Mammary epithelial cell (primary cell): ENCODE measurements at regions of chrX and their contacts with region 1.

Region 1: GRCh38 chrX:15930585-15930984 is 76.0 kb upstream of the AP1S2 start:
- DNase-seq: peak; percentile 45
- H3K4me3 ChIP-seq: no peak overlapping the region
- H3K27ac ChIP-seq: no peak overlapping the region
- H3K4me1 ChIP-seq: no peaks in the 10 kb centered on the region
- H3K27me3 ChIP-seq: peaks cover 1% of the 10 kb centered on the region
- CTCF ChIP-seq: peak; percentile 36 to 65

Region 2: DNA sequence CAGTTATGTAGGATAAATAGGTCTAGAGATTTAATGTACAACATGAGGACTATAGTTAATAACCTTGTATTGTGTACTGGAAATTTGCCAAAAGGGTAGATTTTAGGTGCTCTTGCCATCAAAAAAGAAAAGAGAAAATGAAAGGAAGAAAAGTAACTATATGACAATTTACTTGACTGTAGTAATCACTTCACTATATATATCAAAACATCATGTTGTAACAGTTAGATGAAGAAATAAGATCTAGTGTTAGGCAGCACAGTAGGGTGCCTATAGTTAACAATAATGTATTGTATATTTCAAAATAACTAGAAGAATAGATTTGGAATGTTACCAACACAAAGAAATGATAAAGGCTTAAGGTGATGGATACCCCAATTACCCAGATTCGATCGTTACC is 40.1 kb before region 1 on chrX:
- CTCF ChIA-PET with region 1: no interaction called
- dilution Hi-C with region 1: loop called (anchors 5 kb)
- in situ Hi-C with region 1: no loop called
- intact Hi-C with region 1: no loop called
- DNase-seq: no peak
- H3K4me3 ChIP-seq: no peak overlapping the region
- H3K27ac ChIP-seq: no peak overlapping the region
- H3K4me1 ChIP-seq: no peaks in the 10 kb centered on the region
- H3K27me3 ChIP-seq: no peaks in the 10 kb centered on the region
- CTCF ChIP-seq: no peak

Region 3: DNA sequence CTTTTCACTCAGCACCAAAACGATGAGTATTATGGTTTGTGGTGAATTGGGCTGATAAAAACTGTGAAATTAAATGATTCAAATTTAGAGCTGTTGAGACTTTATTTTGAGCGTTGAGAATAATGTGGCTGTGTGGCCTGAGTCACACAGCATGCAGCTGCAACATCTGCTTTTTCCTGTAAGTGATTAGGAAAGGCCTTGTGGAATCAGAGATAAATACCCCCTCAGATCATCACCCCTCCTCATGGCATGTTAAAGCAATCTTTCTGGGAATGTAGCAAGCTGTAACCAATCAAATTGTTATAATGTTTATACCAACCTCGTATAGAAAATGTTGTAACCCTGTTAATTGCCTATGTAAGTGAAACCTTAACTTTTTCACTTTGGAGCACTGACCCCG is 102.7 kb after region 1 on chrX:
- CTCF ChIA-PET with region 1: no interaction called
- dilution Hi-C with region 1: no loop called
- in situ Hi-C with region 1: no loop called
- intact Hi-C with region 1: no loop called
- DNase-seq: no peak
- H3K4me3 ChIP-seq: no peak overlapping the region
- H3K27ac ChIP-seq: no peak overlapping the region
- H3K4me1 ChIP-seq: no peaks in the 10 kb centered on the region
- H3K27me3 ChIP-seq: no peaks in the 10 kb centered on the region
- CTCF ChIP-seq: no peak

Region 4: GRCh38 chrX:16212436-16212835 is 281.9 kb after region 1 on chrX:
- CTCF ChIA-PET with region 1: no interaction called
- dilution Hi-C with region 1: no loop called
- in situ Hi-C with region 1: no loop called
- intact Hi-C with region 1: loop called (anchors 1 kb)
- DNase-seq: no peak
- H3K4me3 ChIP-seq: no peak overlapping the region
- H3K27ac ChIP-seq: no peak overlapping the region
- H3K4me1 ChIP-seq: peaks cover 7% of the 10 kb centered on the region
- H3K27me3 ChIP-seq: no peaks in the 10 kb centered on the region
- CTCF ChIP-seq: peak; percentile 26 to 31

Region 5: GRCh38 chrX:16670998-16671397 is 740.4 kb after region 1 on chrX:
- CTCF ChIA-PET with region 1: interaction called, 3 read pairs
- dilution Hi-C with region 1: no loop called
- in situ Hi-C with region 1: loop called in 1 of 2 experiments (anchors 25 kb)
- intact Hi-C with region 1: loop called (anchors 1 kb)
- DNase-seq: peak; percentile 25
- H3K4me3 ChIP-seq: no peak overlapping the region
- H3K27ac ChIP-seq: no peak overlapping the region
- H3K4me1 ChIP-seq: no peaks in the 10 kb centered on the region
- H3K27me3 ChIP-seq: no peaks in the 10 kb centered on the region
- CTCF ChIP-seq: peak; percentile 41 to 53

Region 6: GRCh38 chrX:16838202-16839066 is 907.8 kb after region 1 on chrX:
- CTCF ChIA-PET with region 1: no interaction called
- dilution Hi-C with region 1: no loop called
- in situ Hi-C with region 1: no loop called
- intact Hi-C with region 1: no loop called
- DNase-seq: peak; percentile 48
- H3K4me3 ChIP-seq: no peak overlapping the region
- H3K27ac ChIP-seq: no peak overlapping the region
- H3K4me1 ChIP-seq: peaks cover 7% of the 10 kb centered on the region
- H3K27me3 ChIP-seq: no peaks in the 10 kb centered on the region
- CTCF ChIP-seq: no peak